ENCODE measurements at regions of chr3 and their contacts with region 1.

Region 1: GRCh38 chr3:184185461-184186308 is at the start of gene ABCF3:
- DNase-seq: peak; percentile 99 to 100 (median 99)
- H3K4me3 ChIP-seq: peak within 1 kb of the TSS; percentile 85
- H3K27ac ChIP-seq: peak within 1 kb of the TSS; percentile 55 to 73
- H3K4me1 ChIP-seq: peaks cover 4% of the 10 kb centered on the region
- H3K27me3 ChIP-seq: no peaks in the 10 kb centered on the region
- CTCF ChIP-seq: no peak
- EP300 ChIP-seq: no peak
- POLR2A ChIP-seq: peak; percentile 68
- total RNA-seq, gene ABCF3: 56.6 to 82.0 (median 61.7) TPM

Region 2: DNA sequence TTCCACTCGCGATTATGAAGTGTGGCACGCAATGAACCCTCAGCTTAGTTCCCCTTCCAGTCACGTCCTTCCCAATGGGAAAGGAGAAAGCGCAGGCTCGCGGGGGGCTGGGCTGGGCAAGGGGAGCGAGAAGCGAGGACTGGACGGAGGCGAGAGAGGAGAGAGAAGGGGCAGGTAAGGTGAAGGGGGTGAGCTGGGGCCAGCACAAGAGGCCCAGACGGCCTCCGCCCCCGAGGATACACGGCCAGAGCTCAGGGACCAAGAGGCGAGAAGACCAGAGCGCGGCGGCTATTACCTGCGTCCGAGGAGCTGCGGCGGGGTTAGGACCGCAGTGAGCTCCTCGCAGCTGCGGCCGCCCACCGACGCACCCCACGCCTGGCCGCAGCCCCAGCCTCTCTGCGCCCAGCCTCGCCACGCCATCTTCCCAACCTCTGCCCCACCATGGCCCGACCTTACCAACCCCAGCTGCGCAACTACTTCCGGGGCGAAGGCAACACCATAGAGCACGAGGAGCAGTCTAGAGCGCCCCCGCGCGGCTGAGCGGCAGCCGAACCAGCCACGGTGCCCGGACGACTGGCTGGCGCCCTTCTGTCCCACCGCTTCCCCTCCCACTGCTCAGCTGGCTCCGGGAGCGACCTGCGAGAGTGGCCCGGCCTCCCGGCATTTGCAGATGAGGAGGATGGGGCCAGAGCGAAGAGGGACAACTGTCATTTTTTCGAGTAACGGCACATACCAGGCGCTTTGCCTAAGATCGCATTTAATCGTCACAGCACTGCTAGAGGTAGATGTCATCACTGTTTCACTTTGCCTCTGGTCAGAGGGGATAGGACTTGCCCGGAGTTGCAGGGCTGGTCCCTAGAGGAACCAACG is 301.0 kb before region 1 on chr3 and contains the start of gene PARL:
- intact Hi-C with region 1: loop called in 1 of 4 experiments (anchors 5 kb)
- DNase-seq: peak; percentile 93 to 97 (median 95)
- H3K4me3 ChIP-seq: peak within 1 kb of the TSS; percentile 92
- H3K27ac ChIP-seq: peak within 1 kb of the TSS; percentile 37 to 46
- H3K4me1 ChIP-seq: peaks cover 10% of the 10 kb centered on the region
- H3K27me3 ChIP-seq: no peaks in the 10 kb centered on the region
- CTCF ChIP-seq: peak; percentile 91 to 96 (median 94)
- EP300 ChIP-seq: no peak
- POLR2A ChIP-seq: no peak
- total RNA-seq, gene PARL: 32.7 to 65.0 (median 56.3) TPM

Region 3: GRCh38 chr3:184320099-184320445 is 134.4 kb after region 1 on chr3:
- intact Hi-C with region 1: loop called in 1 of 4 experiments (anchors 10 kb)
- DNase-seq: peak; percentile 98 to 100 (median 99)
- H3K4me3 ChIP-seq: no peak overlapping the region
- H3K27ac ChIP-seq: peak overlapping the region; percentile 63 to 73
- H3K4me1 ChIP-seq: peaks cover 15% of the 10 kb centered on the region
- H3K27me3 ChIP-seq: no peaks in the 10 kb centered on the region
- CTCF ChIP-seq: no peak
- EP300 ChIP-seq: no peak
- POLR2A ChIP-seq: no peak

Region 4: GRCh38 chr3:184345317-184346144 is 159.8 kb after region 1 on chr3:
- intact Hi-C with region 1: no loop called
- DNase-seq: peak in 1 of 5 donors; percentile 46
- H3K4me3 ChIP-seq: no peak overlapping the region
- H3K27ac ChIP-seq: no peak overlapping the region
- H3K4me1 ChIP-seq: peaks cover 6% of the 10 kb centered on the region
- H3K27me3 ChIP-seq: no peaks in the 10 kb centered on the region
- CTCF ChIP-seq: no peak
- EP300 ChIP-seq: no peak
- POLR2A ChIP-seq: no peak